Activated CD4-positive, alpha-beta memory T cell treated with anti-CD3 and anti-CD28 coated beads for 36 hours (primary cell): ENCODE measurements at regions of chr15 and their contacts with region 1.

Region 1: GRCh38 chr15:63048115-63048775 is 5.7 kb downstream of the TPM1 start:
- DNase-seq: peak; percentile 89
- H3K4me3 Mint-ChIP-seq: peak overlapping the region; percentile 91
- H3K27ac Mint-ChIP-seq: no peak overlapping the region
- H3K4me1 Mint-ChIP-seq: peaks cover 13% of the 10 kb centered on the region
- H3K27me3 Mint-ChIP-seq: peaks cover 33% of the 10 kb centered on the region

Region 2: DNA sequence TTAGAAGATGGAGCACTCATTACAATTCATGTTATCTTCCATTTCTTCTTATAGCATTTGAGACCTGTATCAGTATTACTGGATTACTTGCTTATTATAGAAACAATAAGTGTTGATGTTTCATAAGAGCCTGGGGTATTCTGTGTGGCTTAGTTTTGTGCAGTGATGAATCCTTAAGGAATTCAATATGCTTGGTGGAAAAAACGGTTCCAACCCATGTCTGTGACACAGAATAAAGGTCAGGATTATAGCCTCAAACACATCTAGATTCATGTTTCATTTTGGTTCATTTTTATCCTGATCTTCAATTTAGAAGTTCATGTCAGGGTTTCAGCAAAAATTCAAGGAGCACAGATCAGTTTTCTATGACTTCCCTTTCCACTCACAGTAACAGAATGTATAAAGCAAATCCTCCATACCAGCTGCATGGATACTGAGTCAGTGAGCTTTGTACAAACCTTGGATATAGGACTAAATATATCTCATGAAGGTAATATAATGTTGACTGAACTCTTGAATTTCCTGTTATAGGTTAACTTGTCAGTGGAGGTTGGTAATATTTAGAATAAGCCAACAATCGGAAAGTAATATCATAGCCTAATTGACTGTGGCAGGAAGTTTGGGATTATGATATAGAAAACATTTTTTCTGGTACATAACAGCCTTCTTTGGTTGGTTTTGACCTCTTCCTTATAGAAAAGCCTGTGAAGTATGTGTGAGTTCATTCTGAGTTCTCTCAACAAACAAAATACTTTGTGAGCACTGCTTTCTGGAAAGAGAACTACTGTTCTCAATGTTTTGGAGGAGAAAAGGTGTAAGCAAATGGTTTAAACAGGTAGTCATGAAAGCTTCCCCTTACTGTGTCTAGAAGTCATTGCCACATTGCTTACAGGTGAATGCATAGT is 223.9 kb before region 1 on chr15:
- CTCF ChIA-PET with region 1: no interaction called
- POLR2A ChIA-PET with region 1: no interaction called
- intact Hi-C with region 1: no loop called
- DNase-seq: no peak
- H3K4me3 Mint-ChIP-seq: no peak overlapping the region
- H3K27ac Mint-ChIP-seq: no peak overlapping the region
- H3K4me1 Mint-ChIP-seq: no peaks in the 10 kb centered on the region
- H3K27me3 Mint-ChIP-seq: no peaks in the 10 kb centered on the region

Region 3: GRCh38 chr15:63030101-63030551 is 18.1 kb before region 1 on chr15:
- CTCF ChIA-PET with region 1: interaction called, 14 read pairs
- POLR2A ChIA-PET with region 1: interaction called, 3 read pairs
- intact Hi-C with region 1: no loop called
- DNase-seq: no peak
- H3K4me3 Mint-ChIP-seq: no peak overlapping the region
- H3K27ac Mint-ChIP-seq: no peak overlapping the region
- H3K4me1 Mint-ChIP-seq: no peaks in the 10 kb centered on the region
- H3K27me3 Mint-ChIP-seq: peaks cover 15% of the 10 kb centered on the region

Region 4: DNA sequence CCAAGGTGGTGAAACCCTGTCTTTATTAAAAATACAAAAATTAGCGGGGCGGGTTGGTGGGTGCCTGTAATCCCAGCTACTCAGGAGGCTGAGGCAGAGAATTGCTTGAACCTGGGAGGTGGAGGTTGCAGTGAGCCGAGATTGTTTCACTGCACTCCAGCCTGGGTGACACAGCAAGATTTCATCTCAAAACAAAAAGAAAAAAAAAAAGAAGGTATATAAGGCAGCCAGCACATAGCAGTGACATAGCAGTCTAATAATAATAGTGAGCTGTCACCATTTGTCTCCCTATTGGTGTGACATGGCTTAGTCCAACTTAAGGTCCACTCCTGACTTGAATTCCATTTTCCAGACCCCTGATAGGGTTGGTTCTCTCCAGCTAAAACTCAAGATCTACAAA is 64.6 kb after region 1 on chr15:
- CTCF ChIA-PET with region 1: interaction called, 11 read pairs
- POLR2A ChIA-PET with region 1: no interaction called
- intact Hi-C with region 1: no loop called
- DNase-seq: no peak
- H3K4me3 Mint-ChIP-seq: no peak overlapping the region
- H3K27ac Mint-ChIP-seq: no peak overlapping the region
- H3K4me1 Mint-ChIP-seq: no peaks in the 10 kb centered on the region
- H3K27me3 Mint-ChIP-seq: peaks cover 1% of the 10 kb centered on the region

Region 5: DNA sequence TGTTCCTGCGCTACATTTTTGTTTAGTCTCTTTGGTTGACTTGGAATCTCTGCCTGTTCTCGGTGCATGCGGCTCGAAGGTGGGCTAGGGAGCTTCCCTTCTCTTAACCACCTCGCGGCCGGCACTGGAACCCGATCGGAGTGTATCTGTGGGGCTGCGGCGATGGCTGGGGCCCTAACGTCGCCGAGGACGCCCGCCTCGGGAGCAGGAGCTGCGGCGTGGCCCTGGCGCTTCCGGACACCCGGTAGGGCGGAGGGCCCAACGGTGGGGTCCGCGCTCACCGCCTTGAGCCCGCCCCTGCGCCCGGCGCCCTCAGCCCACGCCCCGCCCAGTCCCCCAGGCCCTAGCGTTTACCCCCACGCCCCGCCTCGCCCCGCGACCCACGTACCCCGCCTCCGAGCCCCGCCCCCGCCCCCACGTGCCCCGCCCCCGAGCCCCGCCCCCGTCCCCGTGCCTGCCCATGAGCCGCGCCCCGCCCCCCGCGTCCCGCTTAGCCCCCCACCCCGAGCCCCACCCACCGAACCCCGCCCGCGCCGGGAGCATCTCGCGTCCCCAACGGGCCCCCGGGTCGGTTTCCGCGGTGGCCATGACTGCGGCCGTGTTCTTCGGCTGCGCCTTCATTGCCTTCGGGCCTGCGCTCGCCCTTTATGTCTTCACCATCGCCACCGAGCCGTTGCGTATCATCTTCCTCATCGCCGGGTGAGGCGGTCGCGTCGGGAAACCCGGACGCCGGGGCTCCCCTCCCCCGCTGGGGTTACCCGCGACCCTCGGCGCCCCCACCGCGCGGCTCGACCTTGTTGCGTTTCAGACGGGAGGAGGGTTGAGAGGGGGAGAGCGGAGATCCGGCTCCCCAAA is 229.0 kb after region 1 on chr15 and contains the start of gene APH1B:
- CTCF ChIA-PET with region 1: interaction called, 6 read pairs
- POLR2A ChIA-PET with region 1: no interaction called
- intact Hi-C with region 1: loop called (anchors 10 kb)
- DNase-seq: peak; percentile 80
- H3K4me3 Mint-ChIP-seq: peak within 1 kb of the TSS; percentile 80
- H3K27ac Mint-ChIP-seq: peak within 1 kb of the TSS; percentile 59
- H3K4me1 Mint-ChIP-seq: peaks cover 20% of the 10 kb centered on the region
- H3K27me3 Mint-ChIP-seq: no peaks in the 10 kb centered on the region
- total RNA-seq, gene APH1B: 6.6 to 7.0 TPM

Region 6: GRCh38 chr15:63322541-63322940 is 274.3 kb after region 1 on chr15:
- CTCF ChIA-PET with region 1: no interaction called
- POLR2A ChIA-PET with region 1: no interaction called
- intact Hi-C with region 1: no loop called
- DNase-seq: no peak
- H3K4me3 Mint-ChIP-seq: no peak overlapping the region
- H3K27ac Mint-ChIP-seq: no peak overlapping the region
- H3K4me1 Mint-ChIP-seq: peaks cover 6% of the 10 kb centered on the region
- H3K27me3 Mint-ChIP-seq: no peaks in the 10 kb centered on the region

Region 7: DNA sequence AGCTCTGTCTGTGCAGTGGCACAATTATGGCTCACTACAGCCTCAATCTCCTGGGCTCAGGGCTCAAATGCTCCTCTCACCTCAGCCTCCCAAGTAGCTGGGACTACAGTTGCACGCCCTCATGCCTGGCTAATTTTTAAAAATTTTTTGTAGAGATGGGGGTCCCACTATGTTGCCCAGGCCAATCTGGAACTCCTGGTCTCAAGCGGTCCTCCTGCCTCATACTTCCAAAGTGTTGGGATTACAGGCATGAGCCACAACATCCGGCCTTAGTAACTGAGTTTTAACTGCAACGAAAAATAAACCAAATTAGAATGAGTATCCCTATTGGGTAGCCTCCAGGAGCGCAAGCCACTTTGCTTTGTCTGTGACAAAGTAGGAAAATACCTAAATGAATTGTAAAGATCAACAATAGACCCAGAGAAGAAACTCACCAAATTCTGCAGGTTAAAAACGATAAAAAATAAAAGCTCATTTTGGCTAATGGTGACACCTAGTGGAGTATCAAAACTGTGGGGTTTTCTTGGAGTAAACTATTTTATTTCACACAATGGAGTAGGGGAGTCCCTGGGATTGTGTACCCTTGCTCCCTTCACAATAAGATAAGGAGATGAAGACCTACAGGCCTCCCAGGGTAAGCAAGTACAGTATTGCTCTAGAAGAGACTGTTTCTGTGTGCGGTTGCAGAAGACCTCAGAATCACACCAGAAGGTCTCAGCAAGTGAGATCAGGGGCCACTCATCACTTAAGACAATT is 354.4 kb after region 1 on chr15:
- CTCF ChIA-PET with region 1: interaction called, 20 read pairs
- POLR2A ChIA-PET with region 1: no interaction called
- intact Hi-C with region 1: loop called (anchors 2 kb)
- DNase-seq: no peak
- H3K4me3 Mint-ChIP-seq: no peak overlapping the region
- H3K27ac Mint-ChIP-seq: no peak overlapping the region
- H3K4me1 Mint-ChIP-seq: peaks cover 3% of the 10 kb centered on the region
- H3K27me3 Mint-ChIP-seq: peaks cover 12% of the 10 kb centered on the region